Ascending aorta (tissue), 2 donors: ENCODE measurements at regions of chr14 and their contacts with region 1.

Region 1: GRCh38 chr14:59897761-59898383 is 22.1 kb upstream of the LRRC9 start:
- DNase-seq: peak in 1 of 2 donors; percentile 70
- H3K4me3 ChIP-seq: no peak overlapping the region
- H3K27ac ChIP-seq: no peak overlapping the region
- H3K4me1 ChIP-seq: no peaks in the 10 kb centered on the region
- H3K27me3 ChIP-seq: no peaks in the 10 kb centered on the region
- CTCF ChIP-seq: peak; percentile 38 to 69 (median 57)

Region 2: GRCh38 chr14:59507063-59507780 is 390.6 kb before region 1 on chr14:
- intact Hi-C with region 1: loop called (anchors 2 kb)
- DNase-seq: peak in 1 of 2 donors; percentile 69
- H3K4me3 ChIP-seq: no peak overlapping the region
- H3K27ac ChIP-seq: no peak overlapping the region
- H3K4me1 ChIP-seq: no peaks in the 10 kb centered on the region
- H3K27me3 ChIP-seq: no peaks in the 10 kb centered on the region
- CTCF ChIP-seq: peak; percentile 60 to 83 (median 80)

Region 3: GRCh38 chr14:59632381-59632780 is 265.5 kb before region 1 on chr14:
- intact Hi-C with region 1: loop called (anchors 5 kb)
- DNase-seq: no peak
- H3K4me3 ChIP-seq: no peak overlapping the region
- H3K27ac ChIP-seq: peak overlapping the region in 1 of 2 donors; percentile 50
- H3K4me1 ChIP-seq: peaks cover 0 to 9% of the 10 kb centered on the region in 2 donors
- H3K27me3 ChIP-seq: no peaks in the 10 kb centered on the region
- CTCF ChIP-seq: peak; percentile 12 to 54 (median 22)

Region 4: DNA sequence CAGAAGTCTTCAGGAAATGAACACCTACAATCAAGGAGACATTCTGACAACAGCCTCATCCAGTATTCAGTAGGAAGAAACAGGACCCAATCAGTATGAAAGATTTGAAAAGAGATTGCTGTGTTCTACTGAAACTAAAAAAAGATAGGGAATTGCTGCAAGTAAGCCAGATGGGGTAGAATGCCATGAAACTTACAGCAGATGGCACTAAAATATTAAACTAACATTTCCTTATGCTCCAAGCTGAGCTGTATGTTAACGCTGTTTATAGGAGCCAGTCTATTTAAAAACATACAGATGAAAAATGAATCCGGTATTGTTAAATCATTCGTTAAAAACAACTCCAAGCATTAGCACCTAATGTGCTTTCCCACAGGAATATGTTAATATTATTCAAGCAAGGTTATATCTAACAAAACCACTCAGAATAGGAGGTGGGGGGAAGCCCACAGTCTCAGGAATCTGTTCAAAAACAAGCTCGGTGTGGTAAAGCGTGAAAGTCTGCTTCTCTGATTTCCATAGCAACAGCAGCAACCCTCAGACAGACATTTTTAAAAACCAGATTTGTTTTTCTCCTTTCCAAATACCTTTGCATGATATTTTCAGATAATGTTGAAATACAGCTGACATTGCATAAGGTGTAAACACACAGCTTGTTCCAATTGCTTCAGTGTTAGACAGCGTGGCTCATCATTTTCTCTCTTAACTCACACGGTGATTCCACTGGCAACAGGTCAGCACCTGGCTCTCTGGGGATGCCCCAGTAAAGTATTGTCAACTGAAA is 189.9 kb before region 1 on chr14:
- intact Hi-C with region 1: loop called (anchors 5 kb)
- DNase-seq: no peak
- H3K4me3 ChIP-seq: no peak overlapping the region
- H3K27ac ChIP-seq: no peak overlapping the region
- H3K4me1 ChIP-seq: no peaks in the 10 kb centered on the region
- H3K27me3 ChIP-seq: no peaks in the 10 kb centered on the region
- CTCF ChIP-seq: peak in 1 of 3 experiments; percentile 22

Region 5: DNA sequence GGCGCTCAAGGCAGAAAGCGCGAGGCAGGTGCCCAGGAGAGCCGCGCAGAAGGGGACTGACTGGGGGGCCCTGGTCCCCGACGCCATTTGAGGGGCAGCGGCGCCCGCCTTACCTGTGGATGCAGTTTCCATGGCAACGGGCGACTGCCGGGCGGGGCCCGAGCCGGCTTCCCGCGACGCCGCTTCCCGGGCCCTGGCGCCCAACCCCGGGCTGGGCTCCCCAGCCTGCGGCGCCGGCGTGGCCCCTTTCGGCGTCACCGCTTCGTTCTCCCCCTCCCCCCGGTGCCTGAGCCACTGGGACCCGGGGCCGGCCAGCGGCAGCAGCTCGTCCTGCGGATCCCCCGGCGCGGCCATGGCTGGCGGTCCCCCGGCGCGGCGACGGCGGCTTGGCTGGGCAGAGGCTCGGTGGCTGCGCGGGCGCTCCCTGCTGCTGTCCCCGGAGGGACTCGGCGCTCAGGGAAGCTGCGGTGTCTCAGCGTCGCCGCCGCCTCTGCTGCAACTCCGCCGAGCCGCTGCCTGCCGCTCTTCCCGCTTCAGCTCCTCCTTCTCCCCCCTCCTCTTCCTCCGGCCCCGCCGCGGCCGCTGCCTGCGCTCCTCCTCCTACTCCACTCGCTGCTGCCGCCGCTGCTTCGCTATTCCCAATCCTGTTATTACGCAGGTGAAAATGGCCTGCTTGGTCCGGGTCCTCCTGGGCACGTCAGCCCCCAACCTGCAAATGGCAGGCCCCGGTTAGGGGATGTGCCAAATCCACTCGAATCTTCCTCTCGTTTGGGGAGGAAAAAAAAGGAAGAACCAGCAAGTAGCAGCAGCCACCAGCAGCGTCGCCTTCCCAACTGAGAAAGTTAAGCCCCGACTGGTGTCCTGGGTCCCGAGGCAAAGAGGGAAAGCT is 27.4 kb before region 1 on chr14 and contains the start of gene RTN1:
- intact Hi-C with region 1: loop called (anchors 2 kb)
- DNase-seq: peak in 1 of 2 donors; percentile 83
- H3K4me3 ChIP-seq: peak within 1 kb of the TSS; percentile 54 to 93
- H3K27ac ChIP-seq: peak within 1 kb of the TSS; percentile 73 to 81
- H3K4me1 ChIP-seq: peaks cover 0 to 7% of the 10 kb centered on the region in 2 donors
- H3K27me3 ChIP-seq: no peaks in the 10 kb centered on the region
- CTCF ChIP-seq: peak in 1 of 3 experiments; percentile 17
- total RNA-seq, gene RTN1: 52.3 TPM

Region 6: GRCh38 chr14:59882957-59883356 is 14.9 kb before region 1 on chr14:
- intact Hi-C with region 1: no loop called
- DNase-seq: no peak
- H3K4me3 ChIP-seq: no peak overlapping the region
- H3K27ac ChIP-seq: no peak overlapping the region
- H3K4me1 ChIP-seq: no peaks in the 10 kb centered on the region
- H3K27me3 ChIP-seq: no peaks in the 10 kb centered on the region
- CTCF ChIP-seq: no peak

Region 7: DNA sequence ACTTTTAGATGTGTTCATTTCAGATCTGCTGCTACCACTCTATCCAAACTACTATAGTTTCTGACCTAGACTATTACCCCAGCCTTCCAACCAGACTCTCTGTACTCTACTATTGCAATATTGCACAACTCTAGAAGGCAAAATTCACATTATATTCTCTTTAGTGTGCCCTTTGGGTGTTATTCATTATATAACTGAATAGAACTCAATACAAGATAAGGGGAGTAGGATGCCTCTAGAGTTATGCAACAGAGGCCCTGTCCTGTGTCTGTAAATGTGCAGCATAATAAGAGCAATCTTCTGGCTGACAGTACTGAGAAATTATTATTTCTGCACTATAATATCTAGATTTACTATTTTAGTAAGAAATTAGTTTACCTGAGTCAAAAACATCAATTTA is 85.2 kb after region 1 on chr14:
- intact Hi-C with region 1: no loop called
- DNase-seq: no peak
- H3K4me3 ChIP-seq: no peak overlapping the region
- H3K27ac ChIP-seq: no peak overlapping the region
- H3K4me1 ChIP-seq: no peaks in the 10 kb centered on the region
- H3K27me3 ChIP-seq: no peaks in the 10 kb centered on the region
- CTCF ChIP-seq: no peak

Region 8: GRCh38 chr14:60051721-60052221 is 153.9 kb after region 1 on chr14:
- intact Hi-C with region 1: no loop called
- DNase-seq: no peak
- H3K4me3 ChIP-seq: no peak overlapping the region
- H3K27ac ChIP-seq: no peak overlapping the region
- H3K4me1 ChIP-seq: no peaks in the 10 kb centered on the region
- H3K27me3 ChIP-seq: no peaks in the 10 kb centered on the region
- CTCF ChIP-seq: no peak

Region 9: DNA sequence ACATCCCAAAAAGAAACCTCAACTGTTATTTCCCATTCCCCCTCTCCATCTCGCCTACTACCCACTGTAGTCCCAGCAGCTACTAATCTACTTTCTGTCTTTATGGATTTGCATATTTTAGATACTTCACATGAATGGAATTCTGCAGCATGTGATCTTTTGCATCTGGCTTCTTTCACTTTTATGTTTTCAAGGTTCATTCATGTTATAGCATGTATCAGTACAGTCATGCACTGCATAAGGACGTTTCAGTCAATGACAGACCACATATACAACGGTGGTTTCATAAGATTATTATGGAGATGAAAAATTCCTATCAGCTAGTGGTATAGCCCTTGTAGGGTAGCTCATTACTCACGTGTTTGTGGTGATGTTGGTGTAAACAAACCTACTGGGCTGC is 218.3 kb after region 1 on chr14:
- intact Hi-C with region 1: no loop called
- DNase-seq: no peak
- H3K4me3 ChIP-seq: no peak overlapping the region
- H3K27ac ChIP-seq: no peak overlapping the region
- H3K4me1 ChIP-seq: peaks cover 0 to 3% of the 10 kb centered on the region in 2 donors
- H3K27me3 ChIP-seq: no peaks in the 10 kb centered on the region
- CTCF ChIP-seq: no peak